Activated T-helper 2 cell treated with anti-CD3 and anti-CD28 coated beads, Interferon-gamma antibody, Interleukin-2, Interleukin-4, amounts not matched to agents 10 μg/mL and 5 μg/mL and 100 μg/mL, durations not matched to agents 14 hours and 24 hours and 36 hours (primary cell): ENCODE measurements at regions of chr13 and their contacts with region 1.

Region 1: DNA sequence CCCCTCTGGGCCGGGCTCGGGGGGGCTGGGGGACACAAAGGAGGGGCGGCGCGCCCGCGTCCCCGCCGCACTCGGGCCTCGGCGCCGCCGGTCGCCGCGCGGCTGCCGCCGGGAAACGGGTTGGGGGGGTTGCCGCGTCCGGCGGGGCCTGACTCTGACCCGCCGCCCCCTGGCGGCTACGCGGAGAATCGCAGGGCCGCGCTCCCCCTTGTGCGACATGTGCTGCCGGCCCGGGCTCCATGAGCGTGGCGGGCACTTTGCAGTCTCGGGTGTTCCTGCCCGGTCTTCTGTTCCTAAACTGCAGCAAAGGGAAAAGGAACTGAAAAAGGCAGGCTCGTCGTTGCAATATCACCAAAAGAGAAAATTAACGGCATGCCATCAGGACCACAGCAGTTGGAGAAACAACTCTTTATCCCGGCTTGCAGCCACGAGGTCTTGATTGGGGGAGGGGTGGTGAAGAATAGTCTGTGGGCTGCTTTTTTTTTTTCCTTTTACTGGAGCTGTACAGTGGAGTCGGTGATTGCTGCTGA is 1.5 kb downstream of the MIR17HG start:
- DNase-seq: peak; percentile 88
- H3K4me3 Mint-ChIP-seq: peak overlapping the region; percentile 98
- H3K27ac Mint-ChIP-seq: peak overlapping the region; percentile 95
- H3K4me1 Mint-ChIP-seq: peaks cover 38% of the 10 kb centered on the region
- H3K27me3 Mint-ChIP-seq: no peaks in the 10 kb centered on the region

Region 2: GRCh38 chr13:90094357-90094756 is 1254.6 kb before region 1 on chr13:
- intact Hi-C with region 1: no loop called
- DNase-seq: no peak
- H3K4me3 Mint-ChIP-seq: no peak overlapping the region
- H3K27ac Mint-ChIP-seq: no peak overlapping the region
- H3K4me1 Mint-ChIP-seq: no peaks in the 10 kb centered on the region
- H3K27me3 Mint-ChIP-seq: no peaks in the 10 kb centered on the region

Region 3: GRCh38 chr13:91313103-91313502 is 35.9 kb before region 1 on chr13:
- intact Hi-C with region 1: loop called (anchors 1 kb)
- DNase-seq: no peak
- H3K4me3 Mint-ChIP-seq: no peak overlapping the region
- H3K27ac Mint-ChIP-seq: no peak overlapping the region
- H3K4me1 Mint-ChIP-seq: peaks cover 9% of the 10 kb centered on the region
- H3K27me3 Mint-ChIP-seq: peaks cover 14% of the 10 kb centered on the region

Region 4: DNA sequence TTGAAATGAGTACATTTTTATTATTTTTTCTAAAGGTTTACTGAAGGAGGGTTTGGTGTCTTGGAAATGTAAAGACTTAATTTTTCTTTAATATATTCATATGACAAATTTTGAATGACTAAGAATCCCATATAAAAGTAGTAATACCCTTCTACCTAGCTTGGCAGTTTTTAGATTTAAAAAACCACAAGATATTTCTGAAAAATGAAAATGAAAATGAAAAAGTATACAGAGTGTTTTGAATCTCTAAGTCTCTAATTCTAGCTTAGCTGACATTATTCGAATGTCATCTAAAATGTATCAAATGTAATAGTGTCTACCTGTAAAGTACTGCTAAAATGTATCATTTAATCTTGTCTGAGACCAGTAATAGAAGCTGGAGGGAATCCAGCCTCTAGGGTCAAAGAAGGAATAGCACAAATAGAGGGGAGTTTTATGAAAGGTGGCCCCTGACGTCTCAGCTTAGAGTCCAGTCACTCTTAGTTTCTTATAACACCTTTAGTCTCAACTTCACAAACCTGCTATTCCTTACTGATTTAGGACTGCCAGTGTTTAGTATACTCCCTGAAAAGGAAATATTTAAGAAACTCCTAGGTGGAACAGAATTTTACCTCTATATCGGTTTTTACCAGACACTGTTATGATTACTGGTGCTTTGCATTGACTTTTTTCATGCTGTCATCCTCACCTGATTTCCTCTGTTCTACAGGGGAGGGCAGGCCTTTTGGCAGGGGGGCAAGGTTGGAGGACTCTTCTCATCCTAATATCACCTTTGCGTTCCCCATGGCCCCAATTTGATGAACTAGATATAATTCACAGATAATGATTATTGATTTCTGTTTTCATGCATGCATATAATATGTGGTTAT is 17.7 kb before region 1 on chr13:
- intact Hi-C with region 1: loop called (anchors 1 kb)
- DNase-seq: no peak
- H3K4me3 Mint-ChIP-seq: peak overlapping the region; percentile 11
- H3K27ac Mint-ChIP-seq: peak overlapping the region; percentile 30
- H3K4me1 Mint-ChIP-seq: peaks cover 16% of the 10 kb centered on the region
- H3K27me3 Mint-ChIP-seq: peaks cover 16% of the 10 kb centered on the region

Region 5: DNA sequence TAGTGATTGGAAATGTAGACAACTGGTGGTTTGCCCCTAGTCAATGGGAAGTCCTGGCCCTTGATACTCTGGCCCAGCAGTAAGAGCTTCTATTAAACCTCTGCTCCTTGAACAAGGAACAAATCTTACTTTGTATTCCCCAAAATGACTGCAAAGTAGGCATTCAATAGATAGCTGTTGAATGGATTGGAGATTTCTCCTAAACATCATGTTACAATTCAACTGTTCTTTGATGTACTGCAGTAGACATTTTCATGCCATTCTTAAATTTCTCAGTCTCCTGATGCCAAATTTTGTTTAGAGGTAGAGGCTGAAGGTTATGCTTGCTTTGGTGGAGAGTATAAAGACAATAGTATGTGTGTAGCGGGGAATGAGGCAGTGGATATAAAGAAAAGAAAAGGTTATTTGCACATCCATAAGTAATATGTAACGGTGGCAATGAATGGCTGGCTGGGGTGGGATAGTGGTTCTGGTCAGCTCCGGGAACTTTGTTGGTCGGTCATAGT is 11.3 kb after region 1 on chr13:
- intact Hi-C with region 1: loop called (anchors 1 kb)
- DNase-seq: no peak
- H3K4me3 Mint-ChIP-seq: no peak overlapping the region
- H3K27ac Mint-ChIP-seq: no peak overlapping the region
- H3K4me1 Mint-ChIP-seq: peaks cover 21% of the 10 kb centered on the region
- H3K27me3 Mint-ChIP-seq: no peaks in the 10 kb centered on the region

Region 6: GRCh38 chr13:91369441-91369831 is 20.5 kb after region 1 on chr13:
- intact Hi-C with region 1: loop called (anchors 2 kb)
- DNase-seq: no peak
- H3K4me3 Mint-ChIP-seq: no peak overlapping the region
- H3K27ac Mint-ChIP-seq: no peak overlapping the region
- H3K4me1 Mint-ChIP-seq: peaks cover 24% of the 10 kb centered on the region
- H3K27me3 Mint-ChIP-seq: peaks cover 6% of the 10 kb centered on the region

Region 7: GRCh38 chr13:91398413-91399272 is 49.7 kb after region 1 on chr13 and contains the start of gene GPC5:
- intact Hi-C with region 1: loop called (anchors 1 kb)
- DNase-seq: peak; percentile 75
- H3K4me3 Mint-ChIP-seq: peak within 1 kb of the TSS; percentile 71
- H3K27ac Mint-ChIP-seq: no peak within 1 kb of the TSS
- H3K4me1 Mint-ChIP-seq: peaks cover 6% of the 10 kb centered on the region
- H3K27me3 Mint-ChIP-seq: peaks cover 74% of the 10 kb centered on the region
- total RNA-seq, gene GPC5: 0.57 and 1.1 TPM in 2 replicates